B cell (primary cell): ENCODE measurements at regions of chr16 and their contacts with region 1.

Region 1: GRCh38 chr16:81403616-81404373 is 40.8 kb upstream of the CMIP start:
- DNase-seq: peak; percentile 89
- ATAC-seq: peak; percentile 95
- H3K4me3 ChIP-seq: peak overlapping the region in 4 of 5 experiments; percentile 16 to 45 (median 35)
- H3K4me3 Mint-ChIP-seq: peak overlapping the region; percentile 40
- H3K27ac ChIP-seq: no peak overlapping the region
- H3K27ac Mint-ChIP-seq: no peak overlapping the region
- H3K4me1 ChIP-seq: peaks cover 0 to 9% of the 10 kb centered on the region in 2 donors
- H3K4me1 Mint-ChIP-seq: peaks cover 4% of the 10 kb centered on the region
- H3K27me3 ChIP-seq: peaks cover 0 to 7% (median 0%) of the 10 kb centered on the region in 4 experiments
- H3K27me3 Mint-ChIP-seq: peaks cover 4% of the 10 kb centered on the region
- CTCF ChIP-seq: peak; percentile 97

Region 2: GRCh38 chr16:79402356-79402755 is 2001.4 kb before region 1 on chr16:
- CTCF ChIA-PET with region 1: no interaction called
- POLR2A ChIA-PET with region 1: no interaction called
- intact Hi-C with region 1: no loop called
- DNase-seq: no peak
- ATAC-seq: no peak
- H3K4me3 ChIP-seq: no peak overlapping the region
- H3K4me3 Mint-ChIP-seq: no peak overlapping the region
- H3K27ac ChIP-seq: no peak overlapping the region
- H3K27ac Mint-ChIP-seq: no peak overlapping the region
- H3K4me1 ChIP-seq: no peaks in the 10 kb centered on the region
- H3K4me1 Mint-ChIP-seq: no peaks in the 10 kb centered on the region
- H3K27me3 ChIP-seq: peaks cover 0 to 3% (median 0%) of the 10 kb centered on the region in 4 experiments
- H3K27me3 Mint-ChIP-seq: peaks cover 5% of the 10 kb centered on the region
- CTCF ChIP-seq: no peak

Region 3: DNA sequence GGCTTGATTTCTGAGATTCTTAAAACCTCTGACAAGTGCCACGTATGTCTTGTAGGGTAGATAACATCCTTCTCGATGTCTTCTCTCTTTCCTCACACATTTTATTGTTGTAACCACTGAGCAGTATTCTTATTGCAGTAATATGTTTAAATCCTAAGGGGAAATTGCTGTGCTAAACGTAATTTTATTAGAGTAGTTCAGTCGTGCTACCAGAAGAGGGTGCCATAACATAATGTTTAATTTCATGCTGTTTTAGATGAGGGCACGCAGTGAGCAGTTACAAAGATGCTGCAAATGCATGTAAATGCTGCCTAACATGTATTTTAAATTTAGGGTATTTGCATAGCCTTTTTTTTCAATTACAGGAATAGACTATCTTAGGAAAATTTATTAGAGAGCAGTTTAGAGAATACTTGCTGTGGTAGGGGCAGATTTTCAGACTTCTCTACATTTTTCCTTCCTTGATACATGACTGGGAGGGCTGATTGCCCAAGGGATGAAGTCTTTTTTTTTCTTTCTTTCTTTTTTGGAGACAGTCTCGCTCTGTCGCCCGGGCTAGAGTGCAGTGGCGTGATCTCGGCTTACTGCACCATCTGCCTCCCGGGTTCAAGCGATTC is 37.4 kb before region 1 on chr16:
- CTCF ChIA-PET with region 1: interaction called, 5 read pairs
- POLR2A ChIA-PET with region 1: no interaction called
- intact Hi-C with region 1: loop called (anchors 2 kb)
- DNase-seq: peak; percentile 73
- ATAC-seq: peak; percentile 85
- H3K4me3 ChIP-seq: no peak overlapping the region
- H3K4me3 Mint-ChIP-seq: no peak overlapping the region
- H3K27ac ChIP-seq: no peak overlapping the region
- H3K27ac Mint-ChIP-seq: no peak overlapping the region
- H3K4me1 ChIP-seq: no peaks in the 10 kb centered on the region
- H3K4me1 Mint-ChIP-seq: no peaks in the 10 kb centered on the region
- H3K27me3 ChIP-seq: no peaks in the 10 kb centered on the region
- H3K27me3 Mint-ChIP-seq: no peaks in the 10 kb centered on the region
- CTCF ChIP-seq: peak; percentile 92

Region 4: GRCh38 chr16:81481207-81481821 is 77.5 kb after region 1 on chr16:
- CTCF ChIA-PET with region 1: interaction called, 12 read pairs
- POLR2A ChIA-PET with region 1: no interaction called
- intact Hi-C with region 1: loop called (anchors 1 kb)
- DNase-seq: peak; percentile 90
- ATAC-seq: peak; percentile 79
- H3K4me3 ChIP-seq: peak overlapping the region; percentile 8 to 53 (median 21)
- H3K4me3 Mint-ChIP-seq: peak overlapping the region; percentile 87
- H3K27ac ChIP-seq: peak overlapping the region; percentile 92 to 95
- H3K27ac Mint-ChIP-seq: peak overlapping the region; percentile 91
- H3K4me1 ChIP-seq: peaks cover 73 to 78% of the 10 kb centered on the region in 2 donors
- H3K4me1 Mint-ChIP-seq: peaks cover 86% of the 10 kb centered on the region
- H3K27me3 ChIP-seq: no peaks in the 10 kb centered on the region
- H3K27me3 Mint-ChIP-seq: no peaks in the 10 kb centered on the region
- CTCF ChIP-seq: no peak

Region 5: GRCh38 chr16:81513204-81514040 is 109.6 kb after region 1 on chr16:
- CTCF ChIA-PET with region 1: interaction called, 10 read pairs
- POLR2A ChIA-PET with region 1: no interaction called
- intact Hi-C with region 1: no loop called
- DNase-seq: no peak
- ATAC-seq: peak; percentile 40
- H3K4me3 ChIP-seq: peak overlapping the region in 2 of 5 experiments; percentile 30 to 35
- H3K4me3 Mint-ChIP-seq: peak overlapping the region; percentile 81
- H3K27ac ChIP-seq: peak overlapping the region; percentile 43 to 59
- H3K27ac Mint-ChIP-seq: peak overlapping the region; percentile 88
- H3K4me1 ChIP-seq: peaks cover 34 to 41% of the 10 kb centered on the region in 2 donors
- H3K4me1 Mint-ChIP-seq: peaks cover 53% of the 10 kb centered on the region
- H3K27me3 ChIP-seq: no peaks in the 10 kb centered on the region
- H3K27me3 Mint-ChIP-seq: no peaks in the 10 kb centered on the region
- CTCF ChIP-seq: no peak

Region 6: GRCh38 chr16:81623363-81624102 is 219.7 kb after region 1 on chr16:
- CTCF ChIA-PET with region 1: interaction called, 54 read pairs
- POLR2A ChIA-PET with region 1: no interaction called
- intact Hi-C with region 1: loop called (anchors 1 kb)
- DNase-seq: peak; percentile 70
- ATAC-seq: peak; percentile 34
- H3K4me3 ChIP-seq: no peak overlapping the region
- H3K4me3 Mint-ChIP-seq: no peak overlapping the region
- H3K27ac ChIP-seq: no peak overlapping the region
- H3K27ac Mint-ChIP-seq: no peak overlapping the region
- H3K4me1 ChIP-seq: peaks cover 5 to 11% of the 10 kb centered on the region in 2 donors
- H3K4me1 Mint-ChIP-seq: peaks cover 16% of the 10 kb centered on the region
- H3K27me3 ChIP-seq: no peaks in the 10 kb centered on the region
- H3K27me3 Mint-ChIP-seq: no peaks in the 10 kb centered on the region
- CTCF ChIP-seq: peak; percentile 65

Region 7: DNA sequence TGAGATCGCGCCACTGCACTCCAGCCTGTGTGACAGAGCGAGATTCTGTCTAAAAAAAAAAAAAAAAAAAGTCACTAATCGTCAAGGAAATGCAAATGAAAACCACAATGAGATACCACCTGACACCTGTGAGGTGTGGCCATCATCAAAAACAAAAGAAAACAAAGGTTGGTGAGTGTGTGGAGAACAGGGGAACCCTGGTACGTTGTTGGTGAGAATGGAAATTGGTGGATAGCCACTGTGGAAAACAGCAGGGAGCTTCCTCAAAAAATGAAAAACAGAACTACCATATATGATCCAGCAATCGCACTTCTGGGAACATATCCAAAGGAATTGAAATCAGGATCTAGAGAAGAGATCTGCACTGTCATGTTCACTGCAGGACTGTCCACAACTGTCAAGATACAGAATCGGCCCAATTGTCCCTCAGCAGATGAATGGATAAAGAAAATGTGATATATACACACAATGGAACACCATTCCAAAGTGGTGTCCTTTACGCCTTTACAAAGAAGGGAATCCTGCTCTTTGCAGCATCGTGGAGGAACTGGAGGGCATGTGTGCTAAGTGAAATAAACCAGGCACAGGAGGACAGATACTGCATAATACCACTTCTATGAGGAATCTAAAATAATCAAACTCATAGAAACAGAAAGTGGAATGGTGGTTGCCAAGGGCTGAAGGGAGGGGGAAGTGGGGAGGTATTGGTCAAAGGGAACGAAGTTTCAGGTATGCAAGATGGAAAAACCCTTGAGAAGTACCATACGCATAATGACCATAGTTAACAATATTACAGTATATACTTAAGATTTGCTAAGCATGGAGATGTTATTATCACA is 311.8 kb after region 1 on chr16:
- CTCF ChIA-PET with region 1: interaction called, 10 read pairs
- POLR2A ChIA-PET with region 1: no interaction called
- intact Hi-C with region 1: no loop called
- DNase-seq: peak; percentile 82
- ATAC-seq: peak; percentile 74
- H3K4me3 ChIP-seq: peak overlapping the region; percentile 15 to 63 (median 24)
- H3K4me3 Mint-ChIP-seq: peak overlapping the region; percentile 90
- H3K27ac ChIP-seq: peak overlapping the region; percentile 65 to 86
- H3K27ac Mint-ChIP-seq: peak overlapping the region; percentile 89
- H3K4me1 ChIP-seq: peaks cover 42 to 57% of the 10 kb centered on the region in 2 donors
- H3K4me1 Mint-ChIP-seq: peaks cover 50% of the 10 kb centered on the region
- H3K27me3 ChIP-seq: no peaks in the 10 kb centered on the region
- H3K27me3 Mint-ChIP-seq: no peaks in the 10 kb centered on the region
- CTCF ChIP-seq: no peak

Region 8: DNA sequence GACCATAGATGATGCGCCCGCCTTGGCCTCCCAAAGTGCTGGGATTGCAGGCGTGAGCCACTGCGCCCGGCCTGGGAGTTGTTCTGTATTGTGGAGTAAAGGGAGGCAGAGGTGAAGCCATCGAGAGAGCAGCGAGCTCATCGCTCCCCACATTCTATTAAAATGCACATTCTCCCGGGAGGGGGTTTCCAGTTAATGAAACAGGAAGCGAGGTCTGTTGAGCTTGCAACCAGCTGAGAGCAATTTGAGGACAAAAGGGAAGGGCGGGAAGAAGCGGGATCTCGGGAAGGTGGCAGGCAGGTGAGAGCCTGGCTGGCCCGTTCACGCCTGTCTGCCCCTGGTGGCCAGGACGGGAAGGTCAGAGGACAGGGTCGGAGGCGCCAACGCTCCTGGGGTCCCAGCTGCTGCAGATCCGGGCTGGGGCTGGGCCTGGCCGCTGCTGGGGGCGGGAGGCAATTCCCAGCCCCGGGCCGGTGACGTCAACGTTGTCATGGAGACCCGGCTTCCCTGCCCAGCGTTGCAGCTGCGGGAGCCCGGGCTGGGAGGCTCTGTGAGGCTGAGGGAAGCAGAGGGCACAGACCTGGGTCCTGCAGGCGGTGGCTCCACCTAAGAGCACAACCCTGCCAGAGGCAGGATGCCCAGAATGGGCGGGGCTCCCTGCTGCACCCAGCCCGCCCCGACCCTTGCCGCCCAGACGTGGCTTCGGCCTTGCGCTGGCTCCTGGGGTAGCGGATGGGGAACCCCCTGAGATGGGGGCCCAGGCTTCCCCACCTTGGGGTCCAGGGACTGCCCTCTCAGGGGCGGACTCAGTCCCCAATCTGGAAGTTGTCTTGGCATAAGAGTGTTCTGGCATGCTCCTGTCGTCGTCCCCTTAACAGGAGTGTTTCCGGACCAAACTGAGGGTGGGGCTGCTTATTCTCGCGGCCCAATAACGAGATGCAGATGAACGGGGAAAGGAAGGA is 326.6 kb after region 1 on chr16:
- CTCF ChIA-PET with region 1: interaction called, 11 read pairs
- POLR2A ChIA-PET with region 1: no interaction called
- intact Hi-C with region 1: no loop called
- DNase-seq: peak; percentile 77
- ATAC-seq: peak; percentile 85
- H3K4me3 ChIP-seq: peak overlapping the region in 4 of 5 experiments; percentile 44 to 61 (median 55)
- H3K4me3 Mint-ChIP-seq: peak overlapping the region; percentile 90
- H3K27ac ChIP-seq: peak overlapping the region in 1 of 2 donors; percentile 62
- H3K27ac Mint-ChIP-seq: peak overlapping the region; percentile 90
- H3K4me1 ChIP-seq: peaks cover 12 to 15% of the 10 kb centered on the region in 2 donors
- H3K4me1 Mint-ChIP-seq: peaks cover 22% of the 10 kb centered on the region
- H3K27me3 ChIP-seq: no peaks in the 10 kb centered on the region
- H3K27me3 Mint-ChIP-seq: no peaks in the 10 kb centered on the region
- CTCF ChIP-seq: peak; percentile 74